A673 (cell line): ENCODE measurements at regions of chr22 and their contacts with region 1.

Region 1: DNA sequence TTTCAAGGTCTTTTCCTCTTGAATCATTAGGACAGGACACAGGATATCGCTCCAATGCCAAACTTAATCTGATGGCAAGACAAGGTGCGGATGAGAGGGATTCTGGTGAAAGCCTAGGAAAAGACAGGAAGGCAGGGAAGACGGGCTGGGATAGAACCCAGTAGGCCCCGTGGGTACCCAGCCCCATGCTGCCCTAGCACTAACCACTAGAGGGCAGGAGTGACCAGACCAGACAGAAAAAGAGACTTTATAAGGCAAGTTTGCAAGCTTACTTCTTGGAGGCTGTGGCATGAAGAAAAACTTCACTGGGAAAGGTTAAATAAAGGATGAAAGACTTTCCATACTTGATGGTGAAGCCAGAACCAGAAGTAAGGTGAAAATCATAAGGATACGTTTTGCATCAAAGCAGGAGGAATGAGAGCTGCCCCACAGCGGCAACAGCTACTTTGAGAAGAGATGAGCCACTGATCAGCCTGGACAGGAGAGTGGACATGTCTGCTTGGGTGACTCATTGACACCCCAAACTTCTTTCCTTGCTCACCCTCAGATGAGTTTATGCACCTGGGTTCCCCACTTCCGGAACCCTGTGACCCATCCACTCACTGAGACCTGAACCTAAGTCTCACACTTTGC is 39.8 kb downstream of the SYN3 start:
- DNase-seq: peak; percentile 55
- H3K4me3 ChIP-seq: no peak overlapping the region
- H3K27ac ChIP-seq: no peak overlapping the region
- H3K4me1 ChIP-seq: no peaks in the 10 kb centered on the region
- H3K27me3 ChIP-seq: no peaks in the 10 kb centered on the region
- CTCF ChIP-seq: peak; percentile 91

Region 2: DNA sequence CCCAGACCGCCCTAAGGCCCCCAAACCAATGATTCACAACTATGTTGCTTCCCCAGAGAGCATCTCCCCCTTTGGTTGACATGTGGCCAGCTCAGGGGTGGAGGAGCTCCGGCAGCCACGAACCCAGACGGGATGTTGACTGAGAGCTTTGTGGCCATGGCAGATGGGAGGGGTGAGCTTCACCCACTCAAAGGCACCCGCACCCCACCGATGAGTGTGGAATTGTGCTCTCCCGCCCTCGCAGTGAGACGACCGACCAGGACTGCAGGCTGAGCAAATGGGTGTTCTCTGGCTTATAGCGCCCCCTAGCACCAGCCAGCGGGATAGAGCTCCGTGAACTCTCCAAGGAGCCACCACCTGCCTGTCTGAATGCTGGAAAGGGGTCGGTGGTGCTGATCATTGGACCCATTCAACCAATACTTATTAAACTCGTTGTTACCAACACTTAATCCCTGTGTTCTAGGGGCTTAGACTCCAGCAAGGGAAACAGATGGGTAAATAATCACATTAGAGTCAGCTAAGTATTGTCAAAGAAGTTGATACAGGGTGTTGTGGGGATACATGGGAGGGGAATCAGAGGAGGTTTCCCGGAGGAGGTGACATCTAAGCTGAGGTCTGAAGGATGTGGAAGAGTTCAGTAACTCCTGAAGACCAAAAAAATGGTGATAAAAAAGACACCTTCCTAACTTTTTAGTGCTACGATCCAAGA is 221.3 kb before region 1 on chr22:
- CTCF ChIA-PET with region 1: no interaction called
- POLR2A ChIA-PET with region 1: no interaction called
- intact Hi-C with region 1: no loop called
- DNase-seq: peak; percentile 68
- H3K4me3 ChIP-seq: no peak overlapping the region
- H3K27ac ChIP-seq: no peak overlapping the region
- H3K4me1 ChIP-seq: no peaks in the 10 kb centered on the region
- H3K27me3 ChIP-seq: peaks cover 27% of the 10 kb centered on the region
- CTCF ChIP-seq: peak; percentile 94

Region 3: DNA sequence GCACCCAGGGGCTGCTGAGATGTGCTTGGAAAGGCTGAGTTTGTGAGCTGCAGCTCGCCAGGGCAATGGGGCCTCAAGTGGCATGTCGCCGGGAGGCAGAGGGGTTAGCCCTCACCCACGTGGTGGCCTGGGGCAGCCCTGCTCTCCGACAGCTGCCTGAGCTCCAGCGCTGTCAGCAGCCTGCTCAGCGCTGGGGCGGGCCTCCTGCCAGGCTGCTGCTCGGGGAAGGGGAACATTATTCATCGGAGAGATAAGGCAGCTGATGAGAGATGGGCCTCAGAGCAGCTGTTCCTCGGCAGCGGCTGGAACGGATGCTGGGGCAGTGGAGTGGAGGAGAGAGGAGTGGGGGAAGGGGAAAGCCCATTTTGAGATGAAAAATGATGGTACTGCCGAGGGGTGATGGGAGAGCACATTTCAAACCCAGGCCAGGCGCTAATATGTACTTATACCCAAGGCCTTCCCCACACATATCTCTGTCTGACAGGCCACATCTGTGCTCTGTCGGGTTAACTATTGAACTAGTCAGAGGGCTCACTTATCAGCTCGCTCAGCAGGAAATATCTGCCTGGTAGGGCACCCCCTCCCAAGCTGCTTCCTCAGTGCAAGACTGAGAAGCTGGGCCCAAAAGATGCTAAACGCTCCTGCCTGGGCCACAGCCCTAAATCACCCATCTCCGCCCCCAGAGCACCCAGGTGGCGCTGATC is 137.3 kb before region 1 on chr22:
- CTCF ChIA-PET with region 1: no interaction called
- POLR2A ChIA-PET with region 1: no interaction called
- intact Hi-C with region 1: no loop called
- DNase-seq: peak; percentile 59
- H3K4me3 ChIP-seq: no peak overlapping the region
- H3K27ac ChIP-seq: no peak overlapping the region
- H3K4me1 ChIP-seq: peaks cover 15% of the 10 kb centered on the region
- H3K27me3 ChIP-seq: no peaks in the 10 kb centered on the region
- CTCF ChIP-seq: no peak

Region 4: DNA sequence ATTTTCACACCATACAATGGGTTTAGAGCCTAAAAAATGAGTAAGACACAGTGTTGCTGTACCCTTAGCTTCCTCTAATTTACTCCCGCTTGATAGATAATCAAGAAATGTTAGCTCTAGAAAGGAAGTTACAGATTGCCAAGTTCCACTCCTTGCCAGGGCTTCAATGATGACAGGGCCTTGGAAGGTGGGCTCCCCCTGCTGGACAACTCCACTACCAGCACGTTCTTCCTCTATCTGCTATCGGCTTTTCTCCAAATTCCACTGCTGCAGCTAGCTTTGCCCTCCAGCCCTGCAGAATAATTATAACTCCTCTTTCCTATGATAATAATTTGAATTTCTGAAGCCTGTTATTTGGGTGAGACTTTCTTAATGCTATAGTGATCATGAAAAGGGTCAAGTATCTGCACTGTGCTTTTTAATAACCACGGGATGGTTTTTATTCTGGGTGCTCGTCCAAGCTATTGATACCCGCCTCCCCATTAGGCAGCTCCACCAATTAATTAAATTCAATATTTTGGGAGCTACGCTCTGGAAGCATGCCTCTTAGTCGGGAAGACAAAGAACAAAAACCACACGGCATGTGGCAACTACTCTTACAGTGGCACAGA is 30.9 kb after region 1 on chr22:
- CTCF ChIA-PET with region 1: interaction called, 5 read pairs
- POLR2A ChIA-PET with region 1: no interaction called
- intact Hi-C with region 1: loop called (anchors 2 kb)
- DNase-seq: peak; percentile 72
- H3K4me3 ChIP-seq: no peak overlapping the region
- H3K27ac ChIP-seq: no peak overlapping the region
- H3K4me1 ChIP-seq: no peaks in the 10 kb centered on the region
- H3K27me3 ChIP-seq: peaks cover 9% of the 10 kb centered on the region
- CTCF ChIP-seq: peak; percentile 88

Region 5: GRCh38 chr22:33209930-33210784 is 191.8 kb after region 1 on chr22:
- CTCF ChIA-PET with region 1: no interaction called
- POLR2A ChIA-PET with region 1: no interaction called
- intact Hi-C with region 1: loop called (anchors 2 kb)
- DNase-seq: peak; percentile 56
- H3K4me3 ChIP-seq: no peak overlapping the region
- H3K27ac ChIP-seq: no peak overlapping the region
- H3K4me1 ChIP-seq: no peaks in the 10 kb centered on the region
- H3K27me3 ChIP-seq: peaks cover 9% of the 10 kb centered on the region
- CTCF ChIP-seq: peak; percentile 70